BJ (cell line): ENCODE measurements at regions of chr11 and their contacts with region 1.

Region 1: GRCh38 chr11:58905721-58906477 is 33.4 kb upstream of the GLYATL1 start:
- DNase-seq: peak; percentile 63
- H3K4me3 ChIP-seq: peak overlapping the region; percentile 49
- H3K27me3 ChIP-seq: no peaks in the 10 kb centered on the region
- CTCF ChIP-seq: peak; percentile 69

Region 2: GRCh38 chr11:58923300-58923788 is 17.4 kb after region 1 on chr11:
- CTCF ChIA-PET with region 1: interaction called, 20 read pairs
- POLR2A ChIA-PET with region 1: no interaction called
- DNase-seq: no peak
- H3K4me3 ChIP-seq: no peak overlapping the region
- H3K27me3 ChIP-seq: no peaks in the 10 kb centered on the region
- CTCF ChIP-seq: peak; percentile 46